HCT116 (cell line): ENCODE measurements at regions of chr7 and their contacts with region 1.

Region 1: DNA sequence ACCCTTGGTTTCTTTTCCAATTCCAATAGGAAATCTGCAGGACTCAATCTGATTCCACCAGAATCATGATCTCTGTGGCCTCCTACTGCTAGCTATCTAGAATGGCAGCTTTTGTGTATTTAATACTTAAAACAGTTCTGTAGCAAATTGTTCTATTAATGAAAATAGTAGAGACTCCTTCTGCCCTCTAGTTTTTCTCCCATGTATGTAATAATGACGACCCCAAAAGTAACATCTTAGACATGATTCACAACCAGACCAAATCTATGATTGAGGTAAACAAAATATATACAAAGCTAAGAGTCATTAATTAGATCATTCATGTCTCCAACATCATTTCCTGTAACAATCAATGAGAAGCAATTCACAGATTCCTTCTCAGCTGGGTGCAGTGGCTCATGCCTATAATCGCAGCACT is 259.1 kb upstream of the MKLN1 start:
- DNase-seq: no peak
- ATAC-seq: peak; percentile 53
- H3K4me3 ChIP-seq: no peak overlapping the region
- H3K27ac ChIP-seq: no peak overlapping the region
- H3K4me1 ChIP-seq: peaks cover 22 to 35% of the 10 kb centered on the region in 2 experiments
- H3K27me3 ChIP-seq: no peaks in the 10 kb centered on the region
- CTCF ChIP-seq: peak; percentile 16 to 43 (median 39); a peak in 3 of 6 replicates
- POLR2A ChIP-seq: no peak
- RAD21 ChIP-seq: peak; percentile 63

Region 2: DNA sequence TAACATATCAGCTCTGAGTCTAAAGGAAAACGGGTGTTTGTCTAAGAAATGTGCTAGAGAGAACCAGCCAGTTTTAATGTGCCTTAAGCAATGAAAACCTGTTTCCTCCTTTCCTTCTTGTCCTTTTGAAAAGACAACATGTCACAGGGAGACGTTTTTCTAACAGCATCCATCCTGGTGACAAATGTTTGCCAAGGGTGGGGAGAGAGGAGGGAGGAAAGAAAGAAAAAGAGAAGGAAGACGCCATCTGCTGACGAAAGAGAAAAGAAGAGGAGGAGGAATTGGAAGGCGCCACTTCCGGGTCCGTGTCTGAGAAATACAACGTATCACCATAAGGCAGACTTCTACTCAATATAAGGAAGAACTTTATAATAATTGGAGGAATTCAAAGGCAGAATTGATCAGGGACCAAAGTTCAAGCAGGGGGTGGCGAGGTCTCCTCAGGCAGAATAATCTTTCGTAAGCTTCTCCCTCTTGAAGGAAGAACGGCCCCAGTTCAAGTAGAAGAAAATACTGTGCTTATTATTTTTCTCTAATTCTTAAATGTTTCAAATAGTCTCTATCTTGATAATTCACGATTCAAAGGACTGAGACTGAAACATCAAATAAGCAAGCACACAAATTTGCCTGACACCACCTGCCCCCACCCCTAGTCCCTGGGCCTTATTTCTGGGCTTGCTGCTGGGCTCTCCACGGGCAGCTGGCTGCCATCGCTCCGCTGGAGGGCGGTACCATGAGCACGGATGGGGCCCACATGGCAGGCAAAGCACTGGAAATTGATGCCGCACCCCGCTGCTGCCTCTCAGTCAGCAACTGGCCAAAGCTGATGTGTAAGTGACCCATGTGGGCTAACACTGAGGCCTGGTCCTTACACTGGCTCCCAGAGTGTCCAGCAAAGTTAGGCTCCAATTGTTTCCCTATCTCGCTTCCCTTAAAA is 61.0 kb before region 1 on chr7:
- CTCF ChIA-PET with region 1: no interaction called
- POLR2A ChIA-PET with region 1: no interaction called
- RAD21 ChIA-PET with region 1: no interaction called
- intact Hi-C with region 1: no loop called
- DNase-seq: peak; percentile 85
- ATAC-seq: peak; percentile 67
- H3K4me3 ChIP-seq: peak overlapping the region in 1 of 2 experiments; percentile 3; a peak in 1 of 4 replicates
- H3K27ac ChIP-seq: peak overlapping the region; percentile 96
- H3K4me1 ChIP-seq: peaks cover 94 to 97% of the 10 kb centered on the region in 2 experiments
- H3K27me3 ChIP-seq: no peaks in the 10 kb centered on the region
- CTCF ChIP-seq: peak in 2 of 3 experiments; percentile 48 to 60; a peak in 4 of 6 replicates
- POLR2A ChIP-seq: no peak
- RAD21 ChIP-seq: no peak

Region 3: DNA sequence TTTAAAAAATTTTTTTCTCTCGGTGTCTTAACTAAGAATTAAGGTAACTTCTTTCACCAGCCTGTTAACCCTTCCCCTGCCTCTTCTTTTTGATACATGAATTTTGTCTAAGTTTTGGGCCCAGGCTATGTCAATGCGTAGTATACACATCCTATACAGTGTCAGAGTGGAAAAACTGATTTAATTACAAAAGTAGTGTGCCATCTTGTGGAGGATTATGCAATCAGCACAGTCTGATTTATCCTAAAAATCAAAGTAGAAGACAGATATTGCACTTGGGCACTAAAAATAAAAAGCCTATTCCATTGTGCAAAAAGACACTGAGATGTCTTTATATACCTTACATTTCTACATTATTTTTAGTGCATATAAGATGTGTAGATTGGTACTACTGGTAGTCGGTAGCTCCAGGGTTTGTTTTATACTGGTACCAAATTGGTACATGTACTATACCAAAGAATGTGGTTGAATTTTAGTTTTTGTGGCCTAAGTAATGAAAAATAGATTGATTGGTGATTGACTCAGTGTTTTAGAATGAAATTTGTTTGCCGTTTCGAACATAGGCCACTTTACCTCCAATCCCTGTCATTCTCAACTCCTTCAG is 355.7 kb after region 1 on chr7:
- CTCF ChIA-PET with region 1: interaction called, 7 read pairs
- POLR2A ChIA-PET with region 1: no interaction called
- RAD21 ChIA-PET with region 1: no interaction called
- intact Hi-C with region 1: loop called (anchors 1 kb)
- DNase-seq: peak; percentile 12
- ATAC-seq: peak; percentile 84
- H3K4me3 ChIP-seq: no peak overlapping the region
- H3K27ac ChIP-seq: no peak overlapping the region
- H3K4me1 ChIP-seq: no peaks in the 10 kb centered on the region; a peak in 1 of 4 replicates
- H3K27me3 ChIP-seq: no peaks in the 10 kb centered on the region
- CTCF ChIP-seq: peak; percentile 38 to 62 (median 41); a peak in 5 of 6 replicates
- POLR2A ChIP-seq: no peak
- RAD21 ChIP-seq: peak; percentile 74